ENCODE measurements at regions of chr6 and their contacts with region 1.

Region 1: GRCh38 chr6:2749969-2750600 is 637 bp downstream of the MYLK4 start:
- DNase-seq: no peak
- ATAC-seq: peak; percentile 63
- H3K4me3 ChIP-seq: no peak overlapping the region
- H3K27ac ChIP-seq: no peak overlapping the region
- H3K4me1 ChIP-seq: no peaks in the 10 kb centered on the region
- H3K27me3 ChIP-seq: peaks cover 4 to 7% of the 10 kb centered on the region in 2 experiments; a peak in 3 of 4 replicates
- CTCF ChIP-seq: peak; percentile 68 to 75 (median 69)
- EP300 ChIP-seq: no peak
- POLR2A ChIP-seq: no peak
- RAD21 ChIP-seq: peak; percentile 50; the same call in 1 of the 2 replicates

Region 2: GRCh38 chr6:2733324-2733723 is 16.8 kb before region 1 on chr6:
- CTCF ChIA-PET with region 1: interaction called, 85 read pairs
- POLR2A ChIA-PET with region 1: no interaction called
- RAD21 ChIA-PET with region 1: interaction called, 14 read pairs
- SMC1A ChIA-PET with region 1: interaction called, 30 read pairs
- in situ Hi-C with region 1: no loop called
- intact Hi-C with region 1: loop called (anchors 1 kb)
- DNase-seq: peak; percentile 84
- ATAC-seq: peak; percentile 98
- H3K4me3 ChIP-seq: no peak overlapping the region
- H3K27ac ChIP-seq: no peak overlapping the region
- H3K4me1 ChIP-seq: 0 out of 2 replicates have a peak, but pooled peaks cover 2% of the 10 kb centered on the region
- H3K27me3 ChIP-seq: peaks cover 0 to 1% of the 10 kb centered on the region in 2 experiments; a peak in 1 of 4 replicates
- CTCF ChIP-seq: no peak
- EP300 ChIP-seq: peak in 1 of 2 experiments; percentile 23; a peak in 2 of 4 replicates
- POLR2A ChIP-seq: no peak
- RAD21 ChIP-seq: no peak

Region 3: GRCh38 chr6:2764610-2765165 is 14.6 kb after region 1 on chr6:
- CTCF ChIA-PET with region 1: interaction called, 41 read pairs
- POLR2A ChIA-PET with region 1: interaction called, 9 read pairs
- RAD21 ChIA-PET with region 1: no interaction called
- SMC1A ChIA-PET with region 1: interaction called, 10 read pairs
- in situ Hi-C with region 1: no loop called
- intact Hi-C with region 1: no loop called
- DNase-seq: no peak
- ATAC-seq: peak; percentile 83
- H3K4me3 ChIP-seq: peak overlapping the region; percentile 69
- H3K27ac ChIP-seq: peak overlapping the region; percentile 54
- H3K4me1 ChIP-seq: peaks cover 8% of the 10 kb centered on the region
- H3K27me3 ChIP-seq: peaks cover 0 to 3% of the 10 kb centered on the region in 2 experiments; a peak in 2 of 4 replicates
- CTCF ChIP-seq: no peak
- EP300 ChIP-seq: no peak
- POLR2A ChIP-seq: peak; percentile 85
- RAD21 ChIP-seq: no peak

Region 4: GRCh38 chr6:2770171-2770570 is 20.1 kb after region 1 on chr6:
- CTCF ChIA-PET with region 1: interaction called, 41 read pairs
- POLR2A ChIA-PET with region 1: interaction called, 9 read pairs
- RAD21 ChIA-PET with region 1: no interaction called
- SMC1A ChIA-PET with region 1: interaction called, 3 read pairs
- in situ Hi-C with region 1: no loop called
- intact Hi-C with region 1: no loop called
- DNase-seq: no peak
- ATAC-seq: no peak
- H3K4me3 ChIP-seq: no peak overlapping the region
- H3K27ac ChIP-seq: no peak overlapping the region
- H3K4me1 ChIP-seq: peaks cover 11% of the 10 kb centered on the region
- H3K27me3 ChIP-seq: no peaks in the 10 kb centered on the region
- CTCF ChIP-seq: no peak
- EP300 ChIP-seq: no peak
- POLR2A ChIP-seq: no peak
- RAD21 ChIP-seq: no peak

Region 5: DNA sequence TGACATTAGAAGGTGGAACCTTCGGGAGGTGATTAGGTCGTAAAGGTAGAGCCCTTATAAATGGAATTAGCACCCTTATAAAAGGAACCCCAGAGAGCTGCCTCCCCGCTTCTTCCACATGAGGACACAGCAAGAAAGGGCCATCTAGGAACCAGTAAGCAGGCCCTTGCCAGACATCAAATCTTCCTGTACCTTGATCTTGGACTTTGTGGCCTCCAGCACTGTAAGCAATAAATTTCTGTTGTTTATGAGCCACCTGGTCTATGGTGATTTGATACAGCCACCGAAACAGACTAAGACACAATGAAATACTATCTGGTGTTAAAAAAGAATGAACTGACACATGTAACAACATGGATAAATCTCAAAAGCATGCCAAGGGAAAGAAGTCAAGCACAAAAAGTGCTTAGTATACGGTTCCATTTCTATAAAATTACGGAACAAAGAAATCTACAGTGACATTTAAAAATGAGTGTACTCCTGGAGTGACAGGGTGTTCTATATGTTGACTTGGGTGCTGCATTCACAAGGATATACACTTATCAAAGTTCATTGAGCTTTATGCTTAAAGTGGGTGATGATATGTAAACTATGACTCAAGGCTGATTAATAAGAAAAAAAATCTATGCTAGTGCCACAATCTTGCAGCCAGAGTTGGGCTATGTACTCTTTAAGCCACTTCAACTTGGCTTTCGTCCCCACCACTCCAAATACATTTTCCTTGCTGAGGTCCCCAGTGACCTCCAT is 73.2 kb after region 1 on chr6:
- CTCF ChIA-PET with region 1: no interaction called
- POLR2A ChIA-PET with region 1: no interaction called
- RAD21 ChIA-PET with region 1: no interaction called
- SMC1A ChIA-PET with region 1: no interaction called
- in situ Hi-C with region 1: no loop called
- intact Hi-C with region 1: no loop called
- DNase-seq: no peak
- ATAC-seq: no peak
- H3K4me3 ChIP-seq: no peak overlapping the region
- H3K27ac ChIP-seq: no peak overlapping the region
- H3K4me1 ChIP-seq: no peaks in the 10 kb centered on the region
- H3K27me3 ChIP-seq: peaks cover 1 to 8% of the 10 kb centered on the region in 2 experiments; a peak in 1 of 4 replicates
- CTCF ChIP-seq: no peak
- EP300 ChIP-seq: no peak
- POLR2A ChIP-seq: no peak
- RAD21 ChIP-seq: no peak

Region 6: DNA sequence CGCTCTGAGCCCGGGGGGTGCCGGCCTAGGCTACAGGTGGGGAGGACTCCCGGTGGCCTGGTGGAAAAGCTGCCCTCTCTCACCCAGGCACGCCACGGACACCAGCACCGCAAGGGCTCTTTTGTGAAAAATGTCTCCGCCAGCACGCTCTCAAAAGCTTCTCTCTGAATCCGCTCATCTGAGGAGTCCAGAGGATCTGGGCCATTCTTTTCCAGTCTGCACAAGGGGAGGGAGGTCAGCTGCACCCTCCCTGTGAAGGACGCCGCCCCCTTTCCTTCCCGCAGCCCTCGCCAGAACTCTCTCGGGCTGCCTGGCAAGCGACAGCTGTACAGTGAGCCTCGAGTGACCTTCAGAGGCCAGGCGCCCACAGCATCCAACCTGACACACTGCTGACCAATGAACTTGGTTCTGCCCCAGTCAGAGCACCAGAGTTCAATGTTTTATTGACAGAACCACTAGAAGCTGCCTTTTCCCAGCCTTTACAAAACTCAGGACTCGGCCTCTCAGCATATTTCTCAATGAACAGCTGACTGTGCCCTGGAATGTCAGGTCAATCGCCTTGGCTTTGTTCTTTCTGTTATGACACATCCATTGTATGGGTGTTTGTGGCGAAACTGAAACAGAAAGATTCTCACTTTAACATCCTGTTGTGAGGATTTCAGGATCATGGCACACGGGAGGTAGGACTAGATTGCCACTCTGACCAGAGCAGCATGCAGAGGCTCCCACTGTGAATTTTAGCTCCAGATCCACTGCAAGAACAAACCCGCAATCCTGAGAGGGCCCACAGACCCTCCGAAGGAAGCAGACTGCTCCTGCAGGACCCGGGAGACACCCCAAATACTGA is 126.3 kb after region 1 on chr6:
- CTCF ChIA-PET with region 1: no interaction called
- POLR2A ChIA-PET with region 1: no interaction called
- RAD21 ChIA-PET with region 1: no interaction called
- SMC1A ChIA-PET with region 1: no interaction called
- in situ Hi-C with region 1: no loop called
- intact Hi-C with region 1: no loop called
- DNase-seq: no peak
- ATAC-seq: peak; percentile 51
- H3K4me3 ChIP-seq: 0 out of 2 replicates have a peak overlapping the region, but pooled peaks have one; percentile 18
- H3K27ac ChIP-seq: no peak overlapping the region
- H3K4me1 ChIP-seq: peaks cover 36% of the 10 kb centered on the region
- H3K27me3 ChIP-seq: no peaks in the 10 kb centered on the region
- CTCF ChIP-seq: no peak
- EP300 ChIP-seq: no peak
- POLR2A ChIP-seq: no peak; the same call in 1 of the 2 replicates
- RAD21 ChIP-seq: no peak

Region 7: GRCh38 chr6:3031857-3032640 is 282.0 kb after region 1 on chr6:
- CTCF ChIA-PET with region 1: no interaction called
- POLR2A ChIA-PET with region 1: no interaction called
- RAD21 ChIA-PET with region 1: no interaction called
- SMC1A ChIA-PET with region 1: no interaction called
- in situ Hi-C with region 1: no loop called
- intact Hi-C with region 1: no loop called
- DNase-seq: no peak
- ATAC-seq: peak; percentile 48; the same call in 2 of the 3 replicates
- H3K4me3 ChIP-seq: no peak overlapping the region
- H3K27ac ChIP-seq: no peak overlapping the region
- H3K4me1 ChIP-seq: peaks cover 4% of the 10 kb centered on the region; the same call in 1 of the 2 replicates
- H3K27me3 ChIP-seq: no peaks in the 10 kb centered on the region; a peak in 2 of 4 replicates
- CTCF ChIP-seq: peak in 1 of 3 experiments; percentile 25; a peak in 1 of 6 replicates
- EP300 ChIP-seq: no peak
- POLR2A ChIP-seq: no peak
- RAD21 ChIP-seq: 0 out of 2 replicates have a peak, but pooled peaks have one; percentile 24

Measured in GM12878 (cell line).